Activated CD4-positive, alpha-beta T cell treated with anti-CD3 and anti-CD28 coated beads for 36 hours (primary cell): ENCODE measurements at regions of chr5 and their contacts with region 1.

Region 1: DNA sequence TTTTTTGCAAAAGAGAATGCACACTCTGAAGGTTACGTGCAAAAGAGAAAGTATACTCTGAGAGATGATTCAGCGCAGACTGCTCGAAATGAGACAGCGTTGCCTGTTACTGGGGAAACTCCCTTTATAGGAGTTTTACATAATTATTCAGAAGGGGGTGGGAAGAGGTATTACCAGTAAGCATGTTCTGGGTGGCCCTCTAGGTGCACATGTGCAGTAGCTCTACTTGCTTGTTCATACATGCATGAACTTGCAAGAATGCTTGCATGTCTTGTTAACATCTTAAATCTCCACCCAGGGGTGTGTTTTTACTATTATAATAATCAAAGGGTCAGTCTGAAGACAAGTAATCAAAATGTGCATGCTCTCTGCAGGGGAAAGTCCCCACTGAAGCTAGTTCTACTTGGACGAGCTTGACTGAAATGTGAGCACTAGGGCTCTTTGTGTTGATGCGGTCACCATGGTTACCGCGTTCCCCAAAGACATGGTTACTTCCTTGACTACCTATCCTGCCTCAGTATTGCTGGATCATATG is 75.5 kb downstream of the SGCD start:
- DNase-seq: peak; percentile 77
- ATAC-seq: peak; percentile 93
- H3K4me3 Mint-ChIP-seq: no peak overlapping the region
- H3K27ac Mint-ChIP-seq: no peak overlapping the region
- H3K4me1 Mint-ChIP-seq: peaks cover 15% of the 10 kb centered on the region
- H3K27me3 Mint-ChIP-seq: peaks cover 7% of the 10 kb centered on the region

Region 2: GRCh38 chr5:156628421-156628820 is 226.0 kb after region 1 on chr5:
- CTCF ChIA-PET with region 1: no interaction called
- POLR2A ChIA-PET with region 1: no interaction called
- intact Hi-C with region 1: no loop called
- DNase-seq: no peak
- ATAC-seq: no peak
- H3K4me3 Mint-ChIP-seq: no peak overlapping the region
- H3K27ac Mint-ChIP-seq: no peak overlapping the region
- H3K4me1 Mint-ChIP-seq: no peaks in the 10 kb centered on the region
- H3K27me3 Mint-ChIP-seq: no peaks in the 10 kb centered on the region

Region 3: GRCh38 chr5:157116483-157116954 is 714.1 kb after region 1 on chr5:
- CTCF ChIA-PET with region 1: no interaction called
- POLR2A ChIA-PET with region 1: no interaction called
- intact Hi-C with region 1: loop called in 1 of 2 experiments (anchors 5 kb)
- DNase-seq: peak; percentile 58
- ATAC-seq: peak; percentile 83
- H3K4me3 Mint-ChIP-seq: no peak overlapping the region
- H3K27ac Mint-ChIP-seq: peak overlapping the region; percentile 80
- H3K4me1 Mint-ChIP-seq: peaks cover 29% of the 10 kb centered on the region
- H3K27me3 Mint-ChIP-seq: no peaks in the 10 kb centered on the region